ENCODE measurements at regions of chr3 and their contacts with region 1.

Region 1: GRCh38 chr3:87298111-87298718 is 21.8 kb upstream of the POU1F1 start:
- DNase-seq: peak; percentile 68
- H3K4me3 Mint-ChIP-seq: no peak overlapping the region
- H3K27ac Mint-ChIP-seq: no peak overlapping the region
- H3K4me1 Mint-ChIP-seq: no peaks in the 10 kb centered on the region
- H3K27me3 Mint-ChIP-seq: no peaks in the 10 kb centered on the region
- CTCF ChIP-seq: peak; percentile 54

Region 2: GRCh38 chr3:87311309-87311708 is 13.1 kb after region 1 on chr3:
- CTCF ChIA-PET with region 1: interaction called, 12 read pairs
- POLR2A ChIA-PET with region 1: no interaction called
- intact Hi-C with region 1: no loop called
- DNase-seq: no peak
- H3K4me3 Mint-ChIP-seq: no peak overlapping the region
- H3K27ac Mint-ChIP-seq: no peak overlapping the region
- H3K4me1 Mint-ChIP-seq: peaks cover 20% of the 10 kb centered on the region
- H3K27me3 Mint-ChIP-seq: no peaks in the 10 kb centered on the region
- CTCF ChIP-seq: no peak

Region 3: DNA sequence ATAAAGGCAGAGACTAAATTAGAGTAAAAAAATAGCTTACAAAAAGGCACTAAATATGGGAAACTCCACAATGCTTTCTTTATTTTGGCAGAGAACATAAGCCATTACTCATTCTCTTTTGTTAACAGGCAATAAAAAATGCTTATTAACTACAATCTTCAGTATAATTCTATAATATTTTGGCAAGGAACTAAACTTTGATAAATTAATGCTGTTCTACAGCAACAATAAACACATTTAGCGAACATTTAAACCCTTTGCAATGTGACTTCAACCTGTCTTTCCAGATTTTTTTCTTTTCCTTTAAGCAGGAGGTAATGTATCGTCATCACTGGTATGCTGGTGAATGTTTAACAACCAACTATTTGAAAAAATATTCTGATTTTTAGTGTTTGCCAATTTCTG is 20.4 kb after region 1 on chr3:
- CTCF ChIA-PET with region 1: interaction called, 12 read pairs
- POLR2A ChIA-PET with region 1: no interaction called
- intact Hi-C with region 1: no loop called
- DNase-seq: no peak
- H3K4me3 Mint-ChIP-seq: no peak overlapping the region
- H3K27ac Mint-ChIP-seq: no peak overlapping the region
- H3K4me1 Mint-ChIP-seq: peaks cover 6% of the 10 kb centered on the region
- H3K27me3 Mint-ChIP-seq: no peaks in the 10 kb centered on the region
- CTCF ChIP-seq: no peak

Region 4: DNA sequence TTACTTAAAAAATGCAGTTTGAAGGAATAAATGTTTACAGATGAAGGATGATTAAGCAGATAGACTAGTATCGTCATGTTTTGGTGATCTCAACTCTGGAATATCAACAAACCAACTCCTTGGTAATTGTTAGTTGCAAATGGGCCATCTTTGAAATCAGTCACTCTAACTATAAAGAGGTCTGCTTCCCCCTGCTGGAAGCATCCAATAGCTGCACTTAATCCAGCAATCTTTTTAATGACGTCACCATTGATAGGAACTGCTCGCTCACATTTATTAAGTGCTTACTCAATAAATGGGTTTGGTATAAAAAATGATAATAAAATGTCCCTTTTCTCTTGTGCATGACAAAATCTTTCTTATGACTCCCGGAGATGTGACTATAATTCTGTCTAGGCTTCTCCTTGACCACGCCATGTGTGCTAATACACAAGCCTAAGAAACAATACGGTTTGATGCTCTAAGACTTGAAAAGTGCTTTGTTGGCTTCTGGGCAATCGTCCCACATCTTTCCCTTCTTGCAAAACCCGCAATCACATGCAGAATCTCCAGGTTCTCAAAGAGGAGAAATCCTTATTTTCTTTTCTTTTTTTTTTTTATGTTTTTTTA is 205.8 kb after region 1 on chr3:
- CTCF ChIA-PET with region 1: interaction called, 22 read pairs
- POLR2A ChIA-PET with region 1: no interaction called
- intact Hi-C with region 1: loop called (anchors 1 kb)
- DNase-seq: peak; percentile 81
- H3K4me3 Mint-ChIP-seq: no peak overlapping the region
- H3K27ac Mint-ChIP-seq: no peak overlapping the region
- H3K4me1 Mint-ChIP-seq: no peaks in the 10 kb centered on the region
- H3K27me3 Mint-ChIP-seq: no peaks in the 10 kb centered on the region
- CTCF ChIP-seq: peak; percentile 70

Region 5: GRCh38 chr3:88003115-88003755 is 705.0 kb after region 1 on chr3:
- CTCF ChIA-PET with region 1: interaction called, 30 read pairs
- POLR2A ChIA-PET with region 1: no interaction called
- intact Hi-C with region 1: loop called (anchors 1 kb)
- DNase-seq: peak; percentile 68
- H3K4me3 Mint-ChIP-seq: no peak overlapping the region
- H3K27ac Mint-ChIP-seq: no peak overlapping the region
- H3K4me1 Mint-ChIP-seq: no peaks in the 10 kb centered on the region
- H3K27me3 Mint-ChIP-seq: no peaks in the 10 kb centered on the region
- CTCF ChIP-seq: peak; percentile 69

Measured in MCF 10A (cell line).